ENCODE measurements at regions of chr5 and their contacts with region 1.

Region 1: DNA sequence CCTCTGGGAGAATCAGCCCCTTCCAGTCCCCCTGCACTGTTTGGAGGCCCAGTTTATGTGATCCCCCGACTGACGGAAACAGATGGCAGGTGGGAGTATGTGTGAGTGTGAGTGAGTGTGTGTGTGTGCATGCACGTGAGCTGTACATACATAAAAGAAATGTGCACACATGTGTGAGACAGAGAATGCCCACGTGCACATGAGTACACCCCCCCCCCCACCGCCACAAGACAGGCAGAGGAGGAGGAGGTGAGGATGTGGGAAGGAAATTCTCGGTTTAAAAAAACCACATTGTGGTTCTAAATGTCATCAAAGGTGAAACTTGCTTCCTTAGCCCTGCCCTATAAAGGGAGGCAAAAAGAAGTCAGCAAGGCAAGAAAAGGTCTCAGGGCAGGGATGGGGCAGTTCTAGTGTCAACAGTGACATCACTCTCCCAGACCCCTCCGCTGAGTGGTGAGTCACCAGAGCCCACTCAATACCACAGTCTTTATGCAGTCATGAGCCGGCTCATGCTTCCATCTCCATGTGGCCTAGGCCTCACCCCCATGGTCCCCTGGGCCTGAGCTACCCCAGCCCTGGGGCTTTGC is 79.2 kb upstream of the HSPA9 start:
- DNase-seq: peak; percentile 37 to 64
- H3K4me3 ChIP-seq: no peak overlapping the region
- H3K27ac ChIP-seq: 0 out of 2 replicates have a peak overlapping the region, but pooled peaks have one; percentile 18
- H3K4me1 ChIP-seq: peaks cover 20% of the 10 kb centered on the region
- H3K27me3 ChIP-seq: no peaks in the 10 kb centered on the region
- CTCF ChIP-seq: no peak

Region 2: DNA sequence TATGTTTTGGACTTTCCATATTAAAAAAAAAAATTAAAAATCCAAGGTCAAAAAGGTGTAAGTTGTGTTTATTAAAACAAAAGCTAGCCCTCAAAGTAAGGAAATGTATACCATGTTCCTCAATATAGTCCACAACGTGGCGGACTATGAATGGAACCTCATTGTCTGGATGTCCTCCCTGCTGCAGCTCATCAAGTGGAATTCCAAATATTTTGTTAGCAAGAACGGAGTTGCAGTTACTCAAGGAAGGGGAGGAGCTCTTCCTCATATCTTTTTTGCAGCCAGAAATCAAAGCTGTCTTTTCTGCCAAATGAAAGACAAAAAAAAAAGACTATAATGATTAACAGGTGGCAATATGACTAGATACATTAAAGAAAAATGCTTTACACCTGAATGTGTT is 635.5 kb before region 1 on chr5:
- CTCF ChIA-PET with region 1: no interaction called
- POLR2A ChIA-PET with region 1: no interaction called
- intact Hi-C with region 1: no loop called
- DNase-seq: no peak
- H3K4me3 ChIP-seq: no peak overlapping the region
- H3K27ac ChIP-seq: no peak overlapping the region
- H3K4me1 ChIP-seq: peaks cover 6% of the 10 kb centered on the region; the same call in 1 of the 2 replicates
- H3K27me3 ChIP-seq: no peaks in the 10 kb centered on the region
- CTCF ChIP-seq: no peak

Region 3: GRCh38 chr5:138752951-138753793 is 98.8 kb after region 1 on chr5 and contains the start of gene CTNNA1:
- CTCF ChIA-PET with region 1: no interaction called
- POLR2A ChIA-PET with region 1: interaction called, 3 read pairs
- intact Hi-C with region 1: loop called (anchors 1 kb)
- DNase-seq: peak; percentile 70 to 89
- H3K4me3 ChIP-seq: peak within 1 kb of the TSS; percentile 60
- H3K27ac ChIP-seq: peak within 1 kb of the TSS; percentile 74
- H3K4me1 ChIP-seq: peaks cover 30% of the 10 kb centered on the region
- H3K27me3 ChIP-seq: no peaks in the 10 kb centered on the region
- CTCF ChIP-seq: no peak
- total RNA-seq, gene CTNNA1: 91.7 and 94.0 TPM in 2 replicates

Region 4: DNA sequence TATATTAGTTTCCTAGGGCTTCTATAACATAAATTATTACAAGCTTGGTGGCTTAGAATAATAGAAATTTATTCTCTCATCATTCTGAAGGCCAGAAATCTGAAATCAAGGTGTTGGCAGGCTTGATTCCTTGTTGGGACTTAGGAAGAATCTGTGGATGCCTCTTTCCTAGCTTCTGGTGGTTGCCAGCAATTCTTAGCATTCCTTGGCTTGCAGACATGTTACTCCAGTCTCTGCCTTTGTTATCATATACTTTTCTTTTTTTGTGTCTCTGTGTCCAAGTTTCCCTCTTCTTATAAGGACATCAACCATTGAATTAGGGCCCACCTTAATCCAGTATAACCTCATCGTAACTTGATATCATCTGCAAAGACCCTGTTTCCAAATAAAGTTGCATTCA is 130.2 kb after region 1 on chr5:
- CTCF ChIA-PET with region 1: no interaction called
- POLR2A ChIA-PET with region 1: no interaction called
- intact Hi-C with region 1: loop called (anchors 5 kb)
- DNase-seq: no peak
- H3K4me3 ChIP-seq: no peak overlapping the region
- H3K27ac ChIP-seq: no peak overlapping the region
- H3K4me1 ChIP-seq: no peaks in the 10 kb centered on the region
- H3K27me3 ChIP-seq: no peaks in the 10 kb centered on the region
- CTCF ChIP-seq: no peak

Region 5: GRCh38 chr5:138884546-138884945 is 230.2 kb after region 1 on chr5:
- CTCF ChIA-PET with region 1: no interaction called
- POLR2A ChIA-PET with region 1: no interaction called
- intact Hi-C with region 1: loop called (anchors 5 kb)
- DNase-seq: no peak
- H3K4me3 ChIP-seq: no peak overlapping the region
- H3K27ac ChIP-seq: no peak overlapping the region
- H3K4me1 ChIP-seq: peaks cover 16% of the 10 kb centered on the region
- H3K27me3 ChIP-seq: no peaks in the 10 kb centered on the region
- CTCF ChIP-seq: no peak

Region 6: GRCh38 chr5:138918686-138919085 is 264.3 kb after region 1 on chr5:
- CTCF ChIA-PET with region 1: no interaction called
- POLR2A ChIA-PET with region 1: interaction called, 10 read pairs
- intact Hi-C with region 1: no loop called
- DNase-seq: no peak
- H3K4me3 ChIP-seq: no peak overlapping the region
- H3K27ac ChIP-seq: no peak overlapping the region
- H3K4me1 ChIP-seq: peaks cover 6% of the 10 kb centered on the region; the same call in 1 of the 2 replicates
- H3K27me3 ChIP-seq: no peaks in the 10 kb centered on the region
- CTCF ChIP-seq: no peak

Measured in PC-9 (cell line).